ENCODE measurements at regions of chrX and their contacts with region 1.

Region 1: GRCh38 chrX:153627675-153628111 is 19.3 kb upstream of the DUSP9 start:
- DNase-seq: no peak
- H3K4me3 ChIP-seq: no peak overlapping the region
- CTCF ChIP-seq: no peak
- POLR2A ChIP-seq: no peak

Region 2: DNA sequence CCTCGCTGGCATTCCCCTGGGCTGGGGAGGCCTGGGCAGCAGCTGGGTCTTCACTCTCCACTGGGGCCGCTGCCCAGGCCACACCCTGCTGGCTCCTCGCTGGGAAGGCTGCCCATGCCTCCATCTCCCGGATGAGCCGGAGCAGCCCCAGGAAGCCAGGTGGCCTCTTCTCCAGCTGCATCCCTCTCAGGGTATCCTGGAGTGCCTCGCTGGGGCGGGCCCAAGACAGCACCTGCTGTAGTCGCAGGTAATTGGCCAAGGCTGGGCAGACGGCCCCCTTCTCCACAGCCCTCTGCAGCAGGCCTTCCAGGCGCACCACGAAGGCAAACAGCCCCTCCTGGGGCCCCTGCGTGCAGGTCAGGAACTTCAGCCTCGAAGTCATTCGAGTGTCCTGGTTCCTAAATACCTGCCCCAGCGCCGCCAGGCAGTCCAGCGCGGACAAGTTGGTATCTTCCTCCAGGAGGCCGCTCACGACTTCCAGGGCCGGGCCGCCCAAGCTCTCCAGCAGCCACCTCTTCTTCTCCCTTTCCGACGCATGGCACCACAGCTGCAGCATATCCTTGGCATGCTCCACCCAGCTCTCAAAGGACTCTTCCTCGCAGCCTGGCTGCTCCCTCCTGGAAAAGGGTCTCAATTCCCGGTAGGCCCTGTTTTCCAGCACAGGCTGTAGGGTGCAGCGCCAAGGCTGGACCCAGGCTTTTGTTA is 230.3 kb before region 1 on chrX:
- intact Hi-C with region 1: loop called (anchors 10 kb)
- DNase-seq: no peak
- H3K4me3 ChIP-seq: no peak overlapping the region
- CTCF ChIP-seq: no peak
- POLR2A ChIP-seq: no peak